Activated CD8-positive, alpha-beta memory T cell treated with anti-CD3 and anti-CD28 coated beads, Interleukin-2, amount 10 ng/mL, durations not matched to agents 7 days and 5 days (primary cell): ENCODE measurements at regions of chr22 and their contacts with region 1.

Region 1: GRCh38 chr22:24175160-24175808 is 6.0 kb upstream of the SUSD2 start:
- DNase-seq: peak; percentile 76
- ATAC-seq: peak; percentile 69
- H3K4me3 Mint-ChIP-seq: no peak overlapping the region
- H3K27ac Mint-ChIP-seq: peak overlapping the region; percentile 42
- H3K4me1 Mint-ChIP-seq: no peaks in the 10 kb centered on the region
- H3K27me3 Mint-ChIP-seq: no peaks in the 10 kb centered on the region

Region 2: GRCh38 chr22:24060375-24060788 is 114.9 kb before region 1 on chr22:
- CTCF ChIA-PET with region 1: interaction called, 24 read pairs
- DNase-seq: no peak
- ATAC-seq: no peak
- H3K4me3 Mint-ChIP-seq: no peak overlapping the region
- H3K27ac Mint-ChIP-seq: peak overlapping the region; percentile 33
- H3K4me1 Mint-ChIP-seq: peaks cover 22% of the 10 kb centered on the region
- H3K27me3 Mint-ChIP-seq: no peaks in the 10 kb centered on the region

Region 3: DNA sequence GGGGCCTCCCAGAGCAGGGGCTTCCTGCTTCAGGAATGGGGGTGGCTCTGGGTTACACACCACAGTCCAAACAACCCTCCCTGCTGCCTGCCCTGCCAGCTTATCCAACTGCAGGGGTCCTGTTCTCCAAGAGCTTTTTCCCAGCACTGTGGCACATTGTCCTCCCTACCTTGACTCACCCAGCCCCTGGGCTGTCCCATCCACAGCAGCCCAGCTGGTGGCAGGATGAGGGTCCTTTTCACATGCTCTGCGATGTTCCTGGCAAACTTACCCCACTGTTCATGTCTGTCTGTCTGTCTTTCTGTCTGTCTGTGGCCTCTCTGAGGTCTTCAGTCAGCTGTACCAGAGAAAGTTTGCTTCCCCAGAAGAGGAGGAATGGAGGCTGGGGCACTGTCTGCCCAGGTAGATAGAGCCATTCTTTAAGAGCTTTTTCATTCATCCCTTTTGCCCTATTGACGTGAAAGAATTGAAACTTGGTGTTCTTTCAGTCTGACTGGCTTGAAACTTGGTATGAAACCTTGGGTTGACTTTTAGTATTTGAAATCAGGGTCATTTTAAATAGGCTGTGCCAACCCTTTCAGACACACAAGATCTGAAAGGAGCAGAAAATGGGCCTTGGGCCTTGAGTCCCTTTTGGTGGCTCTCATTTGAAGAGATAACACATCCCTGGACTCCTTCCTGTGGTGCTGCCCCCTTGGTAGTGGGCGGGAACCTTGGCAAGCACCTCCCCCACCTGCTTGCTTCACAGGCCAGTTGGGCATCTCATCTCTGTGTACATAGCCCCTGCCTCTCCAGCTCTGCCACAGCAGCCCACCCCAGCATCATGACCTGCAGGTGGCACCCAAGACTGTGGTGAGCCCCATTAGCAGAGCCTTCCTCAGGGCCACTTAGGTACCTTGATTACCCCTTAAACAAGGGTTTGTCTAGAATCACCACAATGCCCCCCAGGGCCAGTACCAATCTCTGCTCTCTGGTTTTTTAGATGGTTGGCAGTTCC is 68.6 kb before region 1 on chr22:
- CTCF ChIA-PET with region 1: interaction called, 31 read pairs
- DNase-seq: peak; percentile 57
- ATAC-seq: peak; percentile 58
- H3K4me3 Mint-ChIP-seq: no peak overlapping the region
- H3K27ac Mint-ChIP-seq: peak overlapping the region; percentile 70
- H3K4me1 Mint-ChIP-seq: peaks cover 45% of the 10 kb centered on the region
- H3K27me3 Mint-ChIP-seq: no peaks in the 10 kb centered on the region

Region 4: DNA sequence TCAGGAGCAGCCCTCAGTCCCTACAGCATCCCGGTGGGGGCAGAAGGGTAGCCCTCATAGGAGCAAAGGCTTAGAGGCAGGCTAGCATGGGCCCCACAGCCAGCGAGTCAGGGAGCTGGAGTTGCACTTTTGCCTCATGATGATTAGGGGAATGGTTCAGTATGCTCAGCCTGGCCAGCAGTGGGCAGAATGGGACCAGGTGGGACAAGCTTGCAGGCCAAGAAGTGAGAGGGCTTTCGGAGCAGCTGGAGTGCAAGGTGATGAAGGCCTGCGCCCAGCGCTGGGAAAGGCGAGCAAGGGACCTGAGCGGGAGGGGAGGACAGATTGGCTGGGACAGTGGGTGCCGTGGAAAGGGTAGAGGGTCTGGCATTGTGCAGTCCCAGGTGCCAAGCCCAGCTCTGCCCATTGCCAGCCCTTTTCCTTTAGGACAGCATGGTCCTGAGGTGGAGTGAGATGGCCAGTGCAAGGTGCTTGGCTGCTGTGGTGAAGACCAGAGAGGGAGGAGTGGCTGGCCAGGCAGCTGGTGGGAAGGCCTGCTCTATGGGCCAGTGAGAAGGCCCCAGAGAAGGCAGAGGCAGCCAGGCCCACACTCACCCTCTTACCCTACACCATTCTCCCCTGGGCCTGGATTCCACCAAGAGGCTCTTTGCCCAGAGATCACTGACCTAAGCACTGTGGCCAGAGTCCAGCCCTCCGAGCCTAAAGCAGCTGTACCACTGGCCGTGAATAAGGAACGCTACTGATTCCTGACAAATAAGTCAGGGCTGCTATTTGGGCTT is 41.9 kb before region 1 on chr22:
- CTCF ChIA-PET with region 1: interaction called, 35 read pairs
- DNase-seq: no peak
- ATAC-seq: peak; percentile 31
- H3K4me3 Mint-ChIP-seq: no peak overlapping the region
- H3K27ac Mint-ChIP-seq: peak overlapping the region; percentile 35
- H3K4me1 Mint-ChIP-seq: peaks cover 14% of the 10 kb centered on the region
- H3K27me3 Mint-ChIP-seq: no peaks in the 10 kb centered on the region

Region 5: DNA sequence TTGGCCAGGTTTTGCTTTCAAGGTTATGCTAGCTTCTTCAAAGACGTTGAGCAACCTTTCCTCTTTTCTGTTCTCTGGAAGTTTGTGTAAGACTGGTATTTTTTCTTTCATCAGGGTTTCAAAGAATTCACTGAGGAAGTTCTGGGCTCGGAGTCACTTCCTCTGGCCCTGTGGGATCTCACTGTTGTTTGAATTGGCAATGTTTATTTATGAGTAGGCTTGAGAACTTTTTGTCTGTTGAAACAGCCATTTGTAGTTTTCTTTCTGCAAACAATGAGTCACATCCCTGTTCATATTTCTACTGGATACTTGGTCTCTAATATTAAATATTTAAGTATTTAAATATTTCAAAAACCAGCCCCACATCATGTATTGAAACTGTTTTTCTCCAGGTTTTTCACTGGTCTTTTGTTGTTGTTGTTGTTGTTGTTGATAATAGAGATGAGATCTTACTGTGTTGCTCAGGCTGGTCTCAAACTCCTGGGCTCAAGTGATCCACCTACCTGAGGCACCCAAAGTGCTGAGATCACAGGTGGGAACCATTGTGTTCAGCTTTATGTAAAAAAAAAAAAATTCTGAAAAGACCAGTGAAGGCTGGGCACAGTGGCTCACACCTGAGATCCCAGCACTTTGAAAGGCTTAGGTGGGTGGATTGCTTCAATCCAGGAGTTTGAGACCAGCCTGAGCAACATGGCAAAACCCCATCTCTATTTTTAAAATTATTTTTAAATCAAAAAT is 32.9 kb after region 1 on chr22:
- CTCF ChIA-PET with region 1: no interaction called
- DNase-seq: no peak
- ATAC-seq: peak; percentile 30
- H3K4me3 Mint-ChIP-seq: peak overlapping the region; percentile 6
- H3K27ac Mint-ChIP-seq: peak overlapping the region; percentile 89
- H3K4me1 Mint-ChIP-seq: peaks cover 48% of the 10 kb centered on the region
- H3K27me3 Mint-ChIP-seq: no peaks in the 10 kb centered on the region